PC-9 (cell line): ENCODE measurements at regions of chr9 and their contacts with region 1.

Region 1: GRCh38 chr9:112844771-112845542 is 45.7 kb downstream of the SLC46A2 start:
- DNase-seq: peak; percentile 43 to 81
- H3K4me3 ChIP-seq: no peak overlapping the region
- H3K27ac ChIP-seq: no peak overlapping the region
- H3K4me1 ChIP-seq: no peaks in the 10 kb centered on the region
- H3K27me3 ChIP-seq: no peaks in the 10 kb centered on the region
- CTCF ChIP-seq: peak; percentile 97

Region 2: GRCh38 chr9:112764344-112764743 is 80.6 kb before region 1 on chr9:
- CTCF ChIA-PET with region 1: no interaction called
- POLR2A ChIA-PET with region 1: no interaction called
- intact Hi-C with region 1: no loop called
- DNase-seq: no peak
- H3K4me3 ChIP-seq: no peak overlapping the region
- H3K27ac ChIP-seq: no peak overlapping the region
- H3K4me1 ChIP-seq: no peaks in the 10 kb centered on the region
- H3K27me3 ChIP-seq: no peaks in the 10 kb centered on the region
- CTCF ChIP-seq: no peak

Region 3: DNA sequence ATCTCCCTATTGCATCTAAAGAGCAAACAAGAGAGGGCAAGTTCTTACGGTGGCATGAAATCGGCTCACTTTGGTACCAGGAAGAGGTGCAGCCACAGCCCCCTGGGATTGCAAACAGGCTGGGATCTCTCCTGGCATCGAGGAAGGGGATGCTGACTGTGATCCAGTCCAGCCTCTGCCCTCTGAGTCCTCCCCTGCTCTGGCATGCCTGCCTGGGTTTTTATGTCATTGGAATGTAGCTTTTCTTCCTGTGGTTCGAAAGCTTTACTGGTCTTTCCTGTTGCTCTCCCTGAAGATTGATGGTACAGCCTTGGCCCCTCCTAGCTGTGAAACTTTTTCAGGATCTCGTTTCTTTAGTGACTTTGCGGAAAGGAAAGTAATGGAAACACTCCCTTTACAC is 39.1 kb after region 1 on chr9:
- CTCF ChIA-PET with region 1: no interaction called
- POLR2A ChIA-PET with region 1: no interaction called
- intact Hi-C with region 1: loop called (anchors 1 kb)
- DNase-seq: peak; percentile 69 to 80
- H3K4me3 ChIP-seq: no peak overlapping the region
- H3K27ac ChIP-seq: no peak overlapping the region
- H3K4me1 ChIP-seq: peaks cover 9% of the 10 kb centered on the region; the same call in 1 of the 2 replicates
- H3K27me3 ChIP-seq: no peaks in the 10 kb centered on the region
- CTCF ChIP-seq: no peak

Region 4: DNA sequence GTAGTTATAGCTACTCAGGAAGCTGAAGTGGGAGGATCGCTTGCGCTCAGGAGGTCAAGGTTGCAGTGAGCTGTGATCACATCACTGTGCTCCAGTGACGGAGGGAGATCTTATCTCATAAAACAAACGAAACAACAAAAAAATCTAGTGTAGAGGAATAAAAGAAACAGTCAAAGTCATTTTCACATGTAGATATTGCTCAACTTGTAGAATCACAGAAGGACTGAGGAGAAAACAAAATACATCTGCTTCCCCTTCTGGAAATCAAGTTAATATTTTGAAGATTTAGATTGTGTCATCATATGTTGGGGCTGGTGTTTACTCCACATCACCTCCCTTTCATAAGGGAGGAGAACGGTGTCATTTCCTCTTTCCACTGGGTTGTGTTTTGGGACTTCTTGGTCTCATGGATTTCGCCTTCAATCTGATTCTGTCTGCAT is 53.9 kb after region 1 on chr9:
- CTCF ChIA-PET with region 1: interaction called, 14 read pairs
- POLR2A ChIA-PET with region 1: no interaction called
- intact Hi-C with region 1: loop called (anchors 1 kb)
- DNase-seq: peak in 1 of 2 experiments; percentile 49
- H3K4me3 ChIP-seq: no peak overlapping the region
- H3K27ac ChIP-seq: no peak overlapping the region
- H3K4me1 ChIP-seq: peaks cover 7% of the 10 kb centered on the region; the same call in 1 of the 2 replicates
- H3K27me3 ChIP-seq: no peaks in the 10 kb centered on the region
- CTCF ChIP-seq: no peak

Region 5: DNA sequence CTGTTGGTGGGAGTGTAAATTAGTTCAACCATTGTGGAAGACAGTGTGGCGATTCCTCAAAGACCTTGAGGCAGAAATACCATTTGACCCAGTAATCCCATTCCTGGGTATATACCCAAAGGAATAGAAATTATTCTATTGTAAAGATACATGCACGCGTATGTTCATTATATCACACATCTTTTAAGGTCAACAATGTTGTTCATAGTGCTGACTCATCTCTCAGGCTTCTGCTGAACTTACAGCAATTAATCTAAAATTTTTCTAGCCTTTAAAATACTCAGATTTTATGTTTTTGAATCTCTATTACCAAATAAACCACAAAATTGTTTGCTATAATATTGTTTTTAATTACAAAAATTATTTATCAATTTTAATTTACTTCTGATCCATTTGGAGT is 992.4 kb after region 1 on chr9:
- CTCF ChIA-PET with region 1: no interaction called
- POLR2A ChIA-PET with region 1: no interaction called
- intact Hi-C with region 1: no loop called
- DNase-seq: no peak
- H3K4me3 ChIP-seq: no peak overlapping the region
- H3K27ac ChIP-seq: no peak overlapping the region
- H3K4me1 ChIP-seq: no peaks in the 10 kb centered on the region
- H3K27me3 ChIP-seq: no peaks in the 10 kb centered on the region
- CTCF ChIP-seq: no peak